Panc1 (cell line): ENCODE measurements at regions of chr9 and their contacts with region 1.

Region 1: DNA sequence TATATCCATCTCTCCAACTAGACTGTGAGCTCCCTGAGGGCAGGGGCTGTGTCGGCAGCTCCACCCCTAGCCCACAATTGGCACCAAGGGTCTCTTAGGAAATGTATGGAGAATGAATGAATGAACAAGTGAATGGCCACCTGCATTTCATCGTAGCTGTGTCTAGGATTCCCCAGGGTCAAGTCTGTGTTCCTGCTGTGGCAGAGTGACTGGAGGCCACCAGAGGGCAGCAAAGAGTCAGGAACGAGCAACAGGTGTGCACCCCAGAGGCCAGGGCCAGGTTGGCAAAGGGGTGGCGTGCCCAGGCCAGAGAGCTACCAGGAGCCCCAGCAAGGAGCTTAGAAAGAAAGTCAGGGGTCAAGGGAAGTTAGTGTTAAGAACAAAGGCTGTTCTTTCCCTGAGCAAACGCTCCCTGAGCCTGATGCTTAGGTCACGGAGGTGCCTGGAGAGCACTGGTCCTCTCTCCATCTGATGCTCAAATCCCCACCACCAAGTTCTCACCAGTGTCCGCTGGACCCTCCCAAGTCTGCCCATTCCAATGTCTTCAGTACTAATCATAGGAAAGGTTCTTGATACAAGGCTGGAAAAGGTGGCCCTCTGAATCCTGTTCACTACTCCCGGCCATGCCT is 160.7 kb downstream of the PAX5 start:
- DNase-seq: peak; percentile 61
- ATAC-seq: peak; percentile 96
- H3K4me3 ChIP-seq: no peak overlapping the region
- H3K27ac ChIP-seq: no peak overlapping the region
- H3K4me1 ChIP-seq: peaks cover 4% of the 10 kb centered on the region; the same call in 1 of the 2 replicates
- H3K27me3 ChIP-seq: no peaks in the 10 kb centered on the region; the same call in 1 of the 2 replicates
- CTCF ChIP-seq: no peak

Region 2: DNA sequence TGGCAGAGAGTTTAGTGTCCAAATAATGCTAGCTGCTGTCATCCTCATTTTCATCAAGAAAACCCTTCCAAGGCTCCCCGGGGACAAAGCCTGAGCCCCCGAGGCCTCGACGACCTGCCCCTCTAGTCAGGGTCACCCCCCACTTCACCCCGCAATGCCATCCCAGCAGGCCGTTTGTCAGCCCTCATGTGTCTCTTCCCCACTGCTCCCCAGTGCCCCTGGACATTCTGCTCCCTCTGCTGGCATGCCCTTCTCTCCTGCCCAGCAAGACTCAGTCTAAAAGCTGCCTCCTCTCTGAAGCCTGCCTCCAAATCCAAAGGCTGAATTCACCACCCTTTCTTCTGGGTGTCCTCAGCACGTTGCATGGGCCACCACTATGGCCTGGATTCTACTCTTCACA is 101.4 kb after region 1 on chr9:
- CTCF ChIA-PET with region 1: interaction called, 35 read pairs
- POLR2A ChIA-PET with region 1: no interaction called
- in situ Hi-C with region 1: no loop called
- intact Hi-C with region 1: loop called (anchors 5 kb)
- DNase-seq: no peak
- ATAC-seq: peak; percentile 81
- H3K4me3 ChIP-seq: no peak overlapping the region
- H3K27ac ChIP-seq: no peak overlapping the region
- H3K4me1 ChIP-seq: no peaks in the 10 kb centered on the region
- H3K27me3 ChIP-seq: no peaks in the 10 kb centered on the region
- CTCF ChIP-seq: no peak

Region 3: GRCh38 chr9:37027582-37028419 is 154.4 kb after region 1 on chr9:
- CTCF ChIA-PET with region 1: interaction called, 12 read pairs
- POLR2A ChIA-PET with region 1: no interaction called
- in situ Hi-C with region 1: no loop called
- intact Hi-C with region 1: no loop called
- DNase-seq: peak; percentile 65
- ATAC-seq: peak; percentile 97
- H3K4me3 ChIP-seq: peak overlapping the region; percentile 43 to 54
- H3K27ac ChIP-seq: no peak overlapping the region
- H3K4me1 ChIP-seq: peaks cover 28% of the 10 kb centered on the region
- H3K27me3 ChIP-seq: peaks cover 62% of the 10 kb centered on the region
- CTCF ChIP-seq: no peak

Region 4: GRCh38 chr9:37350486-37351190 is 477.3 kb after region 1 on chr9:
- CTCF ChIA-PET with region 1: no interaction called
- POLR2A ChIA-PET with region 1: no interaction called
- in situ Hi-C with region 1: no loop called
- intact Hi-C with region 1: no loop called
- DNase-seq: no peak
- ATAC-seq: peak; percentile 62
- H3K4me3 ChIP-seq: no peak overlapping the region
- H3K27ac ChIP-seq: no peak overlapping the region
- H3K4me1 ChIP-seq: no peaks in the 10 kb centered on the region
- H3K27me3 ChIP-seq: no peaks in the 10 kb centered on the region
- CTCF ChIP-seq: no peak

Region 5: DNA sequence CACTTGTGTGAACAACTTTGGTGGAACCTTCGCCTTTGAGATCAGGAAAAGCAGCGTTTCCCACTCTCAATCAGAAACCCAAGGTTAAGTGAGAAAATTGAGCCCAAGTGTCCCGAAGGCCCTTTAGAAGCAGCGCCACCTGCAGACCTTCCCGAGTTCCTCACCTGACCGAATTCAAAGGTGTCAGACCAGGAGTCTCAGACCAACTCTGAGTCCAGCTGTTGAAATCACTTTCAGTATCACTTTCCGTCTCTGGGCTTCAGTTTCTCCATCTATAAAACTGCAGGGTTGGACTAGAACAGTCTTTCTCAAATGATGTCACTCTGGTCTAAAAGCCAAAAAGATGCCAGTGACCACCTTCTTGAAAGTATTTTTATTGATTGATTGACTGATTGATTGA is 517.4 kb after region 1 on chr9:
- CTCF ChIA-PET with region 1: interaction called, 3 read pairs
- POLR2A ChIA-PET with region 1: no interaction called
- in situ Hi-C with region 1: no loop called
- intact Hi-C with region 1: loop called (anchors 10 kb)
- DNase-seq: no peak
- ATAC-seq: no peak
- H3K4me3 ChIP-seq: no peak overlapping the region
- H3K27ac ChIP-seq: no peak overlapping the region
- H3K4me1 ChIP-seq: peaks cover 3% of the 10 kb centered on the region; the same call in 1 of the 2 replicates
- H3K27me3 ChIP-seq: no peaks in the 10 kb centered on the region; the same call in 1 of the 2 replicates
- CTCF ChIP-seq: no peak